ENCODE measurements at regions of chr15 and their contacts with region 1.

Region 1: DNA sequence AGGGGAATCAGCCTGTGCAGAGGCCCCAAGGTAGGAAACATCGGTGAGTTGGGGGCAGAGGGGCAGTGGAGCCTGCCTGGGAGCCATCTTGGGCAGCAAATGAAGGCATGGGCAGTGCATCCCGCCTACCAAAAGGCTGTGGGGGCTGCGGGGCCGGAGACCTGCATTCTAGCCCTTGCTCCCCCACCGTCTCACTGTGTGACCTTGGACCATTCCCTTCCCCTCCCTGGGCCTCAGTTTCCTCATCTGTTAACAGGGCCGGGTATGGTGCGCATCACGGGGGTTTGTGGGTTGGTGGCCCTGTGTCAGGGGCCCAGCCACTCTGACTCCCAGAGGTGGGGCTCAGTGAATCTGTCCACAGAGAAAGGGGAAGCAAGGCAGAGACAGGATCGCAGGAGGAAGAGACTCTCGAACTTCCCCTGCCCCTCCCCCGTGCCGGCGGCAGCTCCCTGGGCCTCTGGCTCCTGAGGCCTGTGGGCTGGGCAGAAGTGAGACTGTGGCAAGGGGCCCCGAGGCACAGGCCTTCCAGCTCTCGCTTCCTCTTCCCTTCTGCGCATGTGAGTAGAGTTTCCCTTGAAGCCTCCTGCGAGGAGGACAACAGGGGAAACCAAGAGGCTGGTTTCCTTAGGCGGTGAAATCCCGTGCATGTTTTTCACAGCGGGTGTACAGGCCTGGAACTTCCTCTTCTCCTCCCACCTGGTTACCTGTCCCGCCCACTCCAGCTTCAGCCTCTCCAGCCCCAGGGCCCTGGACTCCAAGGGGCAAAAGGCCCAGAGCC is 42.9 kb downstream of the IDH2 start:
- DNase-seq: peak; percentile 94
- H3K4me3 Mint-ChIP-seq: peak overlapping the region; percentile 59
- H3K27ac Mint-ChIP-seq: peak overlapping the region; percentile 96
- H3K4me1 Mint-ChIP-seq: peaks cover 49% of the 10 kb centered on the region
- H3K27me3 Mint-ChIP-seq: no peaks in the 10 kb centered on the region

Region 2: GRCh38 chr15:89690276-89691218 is 368.9 kb before region 1 on chr15 and contains the starts of genes PEX11A and WDR93:
- CTCF ChIA-PET with region 1: no interaction called
- intact Hi-C with region 1: loop called (anchors 1 kb)
- DNase-seq: peak; percentile 78
- H3K4me3 Mint-ChIP-seq: peak within 1 kb of the TSS; percentile 88
- H3K27ac Mint-ChIP-seq: peak within 1 kb of the TSS; percentile 41
- H3K4me1 Mint-ChIP-seq: peaks cover 11% of the 10 kb centered on the region
- H3K27me3 Mint-ChIP-seq: no peaks in the 10 kb centered on the region
- total RNA-seq, gene PEX11A: 1.0 to 1.9 TPM
- total RNA-seq, gene WDR93: not detected

Region 3: GRCh38 chr15:90031231-90031791 is 28.1 kb before region 1 on chr15:
- CTCF ChIA-PET with region 1: interaction called, 4 read pairs
- intact Hi-C with region 1: loop called (anchors 1 kb)
- DNase-seq: peak; percentile 57
- H3K4me3 Mint-ChIP-seq: no peak overlapping the region
- H3K27ac Mint-ChIP-seq: peak overlapping the region; percentile 59
- H3K4me1 Mint-ChIP-seq: peaks cover 50% of the 10 kb centered on the region
- H3K27me3 Mint-ChIP-seq: no peaks in the 10 kb centered on the region

Region 4: GRCh38 chr15:90037961-90038631 is 21.3 kb before region 1 on chr15:
- CTCF ChIA-PET with region 1: interaction called, 6 read pairs
- intact Hi-C with region 1: loop called (anchors 1 kb)
- DNase-seq: peak; percentile 86
- H3K4me3 Mint-ChIP-seq: no peak overlapping the region
- H3K27ac Mint-ChIP-seq: peak overlapping the region; percentile 92
- H3K4me1 Mint-ChIP-seq: peaks cover 69% of the 10 kb centered on the region
- H3K27me3 Mint-ChIP-seq: no peaks in the 10 kb centered on the region

Region 5: GRCh38 chr15:90101969-90102890 is 42.8 kb after region 1 on chr15 and contains the start of gene IDH2:
- CTCF ChIA-PET with region 1: no interaction called
- intact Hi-C with region 1: loop called (anchors 1 kb)
- DNase-seq: peak; percentile 64
- H3K4me3 Mint-ChIP-seq: peak within 1 kb of the TSS; percentile 91
- H3K27ac Mint-ChIP-seq: peak within 1 kb of the TSS; percentile 90
- H3K4me1 Mint-ChIP-seq: peaks cover 46% of the 10 kb centered on the region
- H3K27me3 Mint-ChIP-seq: no peaks in the 10 kb centered on the region
- total RNA-seq, gene IDH2: 225 to 229 TPM

Region 6: DNA sequence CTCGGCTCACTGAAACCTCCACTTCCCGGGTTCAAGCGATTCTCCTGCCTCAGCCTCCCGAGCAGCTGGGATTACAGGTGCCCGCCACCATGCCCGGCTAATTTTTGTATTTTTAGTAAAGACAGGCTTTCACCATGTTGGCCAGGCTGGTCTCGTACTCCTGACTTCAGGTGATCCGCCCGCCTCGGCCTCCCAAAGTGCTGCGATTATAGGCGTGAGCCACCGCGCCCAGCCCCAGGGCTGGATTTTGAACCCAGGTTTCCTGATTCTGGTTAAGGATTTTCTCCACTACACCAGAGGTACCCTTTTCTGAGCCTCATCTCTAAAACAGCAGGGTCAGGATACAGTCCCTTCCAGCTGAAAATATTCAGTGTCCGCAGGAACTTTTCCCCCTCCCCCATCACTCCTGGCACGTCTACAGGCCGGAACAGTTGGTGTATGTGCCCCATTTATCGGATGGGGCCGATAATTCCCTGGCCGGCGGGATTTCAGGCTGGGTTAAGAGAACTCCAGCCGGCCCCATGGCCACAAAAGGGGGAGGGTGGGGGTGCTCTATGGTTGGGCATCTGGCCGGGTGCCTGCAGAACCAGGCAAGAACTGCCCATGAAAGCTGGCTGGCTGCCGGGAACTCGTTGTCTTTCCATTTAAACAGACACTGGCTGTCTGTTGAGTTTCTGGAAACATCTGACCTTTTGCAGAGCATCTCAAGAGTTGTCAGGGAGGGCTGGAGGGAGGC is 114.9 kb after region 1 on chr15:
- CTCF ChIA-PET with region 1: no interaction called
- intact Hi-C with region 1: no loop called
- DNase-seq: no peak
- H3K4me3 Mint-ChIP-seq: no peak overlapping the region
- H3K27ac Mint-ChIP-seq: no peak overlapping the region
- H3K4me1 Mint-ChIP-seq: no peaks in the 10 kb centered on the region
- H3K27me3 Mint-ChIP-seq: no peaks in the 10 kb centered on the region

Region 7: GRCh38 chr15:90620379-90621067 is 561.1 kb after region 1 on chr15:
- CTCF ChIA-PET with region 1: no interaction called
- intact Hi-C with region 1: no loop called
- DNase-seq: peak; percentile 45
- H3K4me3 Mint-ChIP-seq: no peak overlapping the region
- H3K27ac Mint-ChIP-seq: peak overlapping the region; percentile 52
- H3K4me1 Mint-ChIP-seq: peaks cover 33% of the 10 kb centered on the region
- H3K27me3 Mint-ChIP-seq: no peaks in the 10 kb centered on the region

Measured in activated naive CD4-positive, alpha-beta T cell treated with anti-CD3 and anti-CD28 coated beads for 36 hours (primary cell).